ENCODE measurements at regions of chr22 and their contacts with region 1.

Region 1: DNA sequence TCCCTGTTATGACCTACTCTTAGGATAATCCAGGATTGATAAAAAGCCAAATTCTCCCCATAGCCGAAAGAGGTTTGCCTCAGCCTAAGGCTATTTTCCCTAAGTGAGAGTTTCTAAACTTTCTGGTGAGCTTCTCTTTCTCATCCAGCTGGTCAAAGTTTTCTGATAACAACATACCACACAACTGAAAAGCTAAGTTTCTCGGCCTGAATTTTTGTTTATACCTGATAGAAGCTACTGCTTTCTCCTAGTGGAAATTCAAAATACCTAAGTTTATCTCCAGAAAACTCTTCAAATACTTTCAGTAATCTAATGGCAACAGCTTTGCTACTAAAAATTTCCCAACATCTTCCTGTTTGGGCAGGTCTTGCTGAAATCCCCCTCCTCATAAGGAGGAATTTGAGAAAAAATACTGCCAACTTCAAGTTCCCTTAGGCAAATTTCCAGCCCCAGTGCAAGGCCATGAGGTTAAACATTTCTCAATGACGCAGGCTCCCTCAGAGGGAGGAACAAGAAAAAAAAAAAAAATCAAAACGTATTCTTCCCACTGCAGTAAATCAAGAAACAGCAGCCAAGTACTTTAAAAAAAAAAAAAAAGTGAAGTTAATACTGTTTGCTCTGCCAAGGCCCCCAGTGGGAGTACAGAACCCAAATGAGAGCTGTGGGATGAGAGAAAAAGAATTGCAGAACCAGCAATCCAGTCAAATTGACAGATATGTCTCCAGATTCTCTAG is 127.0 kb downstream of the MRTFA start:
- ATAC-seq: peak in 4 of 8 experiments; percentile 32 to 64 (median 60)
- H3K4me3 ChIP-seq: no peak overlapping the region
- H3K27ac ChIP-seq: no peak overlapping the region
- H3K4me1 ChIP-seq: peaks cover 10 to 13% of the 10 kb centered on the region in 2 donors

Region 2: GRCh38 chr22:39634671-39635405 is 874.7 kb before region 1 on chr22:
- in situ Hi-C with region 1: no loop called
- ATAC-seq: peak in 3 of 8 experiments; percentile 80 to 95 (median 90)
- H3K4me3 ChIP-seq: no peak overlapping the region
- H3K27ac ChIP-seq: no peak overlapping the region
- H3K4me1 ChIP-seq: peaks cover 3 to 11% of the 10 kb centered on the region in 2 donors

Region 3: DNA sequence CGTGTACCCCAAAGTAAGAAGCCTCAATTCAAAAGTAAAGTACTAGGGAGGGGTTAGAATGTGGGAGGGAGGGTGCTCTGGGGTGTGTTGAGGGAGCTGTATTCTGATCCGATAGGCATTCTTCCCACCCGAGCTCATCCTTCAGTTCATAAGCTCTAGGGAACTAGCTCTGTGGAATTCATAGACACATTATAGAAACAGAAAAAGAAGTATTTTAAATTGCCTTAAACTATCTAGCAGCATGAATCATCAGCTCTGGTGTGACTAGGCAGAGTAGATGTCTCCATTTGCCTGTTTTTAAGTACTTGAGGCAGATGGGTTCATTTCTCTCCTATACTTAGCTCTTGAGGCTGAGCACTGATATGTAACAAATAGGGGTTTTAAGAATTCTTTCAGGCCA is 146.5 kb before region 1 on chr22:
- in situ Hi-C with region 1: no loop called
- ATAC-seq: peak in 2 of 8 experiments; percentile 46 to 55
- H3K4me3 ChIP-seq: no peak overlapping the region
- H3K27ac ChIP-seq: no peak overlapping the region
- H3K4me1 ChIP-seq: no peaks in the 10 kb centered on the region

Region 4: GRCh38 chr22:40400159-40400558 is 109.4 kb before region 1 on chr22:
- in situ Hi-C with region 1: no loop called
- ATAC-seq: no peak
- H3K4me3 ChIP-seq: no peak overlapping the region
- H3K27ac ChIP-seq: no peak overlapping the region
- H3K4me1 ChIP-seq: peaks cover 0 to 10% of the 10 kb centered on the region in 2 donors

Region 5: DNA sequence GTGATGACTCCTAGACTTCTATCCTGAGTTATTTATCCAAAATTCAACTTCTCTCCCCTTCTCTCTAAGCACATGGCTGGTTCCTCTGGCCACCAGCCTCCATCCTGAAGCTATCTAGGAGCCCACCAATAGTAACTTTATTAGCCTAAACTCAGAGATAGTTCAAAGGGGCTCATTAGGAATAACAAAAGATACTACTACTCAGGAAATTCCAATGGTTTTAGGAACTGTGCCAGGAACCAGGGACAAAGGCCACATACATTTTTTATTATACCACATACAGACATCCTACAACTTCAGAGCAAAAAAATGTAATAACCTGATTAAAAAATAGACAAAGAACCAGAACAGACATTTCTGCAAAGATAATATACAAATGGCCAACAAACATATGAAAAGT is 281.7 kb after region 1 on chr22:
- in situ Hi-C with region 1: loop called in 1 of 9 experiments (anchors 25 kb)
- ATAC-seq: no peak
- H3K4me3 ChIP-seq: no peak overlapping the region
- H3K27ac ChIP-seq: no peak overlapping the region
- H3K4me1 ChIP-seq: no peaks in the 10 kb centered on the region